H1 (cell line): ENCODE measurements at regions of chr11 and their contacts with region 1.

Region 1: GRCh38 chr11:1628506-1629325 is 859 bp upstream of the KRTAP5-5 start:
- DNase-seq: peak; percentile 46 to 93
- H3K4me3 ChIP-seq: no peak overlapping the region
- H3K27ac ChIP-seq: no peak overlapping the region
- H3K4me1 ChIP-seq: peaks cover 0 to 4% (median 1%) of the 10 kb centered on the region in 4 experiments; a peak in 5 of 7 replicates
- H3K27me3 ChIP-seq: peaks cover 0 to 16% (median 3%) of the 10 kb centered on the region in 4 experiments; a peak in 5 of 7 replicates
- CTCF ChIP-seq: peak; percentile 90 to 100 (median 98)
- EP300 ChIP-seq: no peak
- POLR2A ChIP-seq: no peak
- RAD21 ChIP-seq: peak; percentile 58 to 71

Region 2: GRCh38 chr11:1613516-1613915 is 15.2 kb before region 1 on chr11:
- CTCF ChIA-PET with region 1: interaction called, 20 read pairs
- POLR2A ChIA-PET with region 1: interaction called, 4 read pairs
- DNase-seq: no peak
- H3K4me3 ChIP-seq: no peak overlapping the region
- H3K27ac ChIP-seq: no peak overlapping the region
- H3K4me1 ChIP-seq: no peaks in the 10 kb centered on the region
- H3K27me3 ChIP-seq: no peaks in the 10 kb centered on the region
- CTCF ChIP-seq: no peak
- EP300 ChIP-seq: no peak
- POLR2A ChIP-seq: no peak
- RAD21 ChIP-seq: no peak

Region 3: GRCh38 chr11:1640076-1640946 is 11.6 kb after region 1 on chr11:
- CTCF ChIA-PET with region 1: interaction called, 47 read pairs
- POLR2A ChIA-PET with region 1: no interaction called
- DNase-seq: peak; percentile 58 to 87
- H3K4me3 ChIP-seq: no peak overlapping the region
- H3K27ac ChIP-seq: no peak overlapping the region
- H3K4me1 ChIP-seq: no peaks in the 10 kb centered on the region; a peak in 1 of 7 replicates
- H3K27me3 ChIP-seq: no peaks in the 10 kb centered on the region; a peak in 1 of 7 replicates
- CTCF ChIP-seq: peak; percentile 86 to 92 (median 89)
- EP300 ChIP-seq: no peak
- POLR2A ChIP-seq: no peak
- RAD21 ChIP-seq: peak; percentile 42 to 60; a peak in 3 of 4 replicates